ENCODE measurements at regions of chr20 and their contacts with region 1.

Region 1: GRCh38 chr20:44092551-44093248 is 94.3 kb downstream of the JPH2 start:
- DNase-seq: no peak
- H3K4me3 ChIP-seq: no peak overlapping the region
- H3K27ac ChIP-seq: no peak overlapping the region
- H3K4me1 ChIP-seq: peaks cover 2% of the 10 kb centered on the region
- H3K27me3 ChIP-seq: no peaks in the 10 kb centered on the region
- CTCF ChIP-seq: no peak
- POLR2A ChIP-seq: no peak

Region 2: GRCh38 chr20:44066645-44067606 is 25.8 kb before region 1 on chr20:
- intact Hi-C with region 1: loop called (anchors 2 kb)
- DNase-seq: peak; percentile 77 to 90
- H3K4me3 ChIP-seq: no peak overlapping the region
- H3K27ac ChIP-seq: no peak overlapping the region
- H3K4me1 ChIP-seq: no peaks in the 10 kb centered on the region
- H3K27me3 ChIP-seq: no peaks in the 10 kb centered on the region
- CTCF ChIP-seq: no peak
- POLR2A ChIP-seq: no peak

Region 3: DNA sequence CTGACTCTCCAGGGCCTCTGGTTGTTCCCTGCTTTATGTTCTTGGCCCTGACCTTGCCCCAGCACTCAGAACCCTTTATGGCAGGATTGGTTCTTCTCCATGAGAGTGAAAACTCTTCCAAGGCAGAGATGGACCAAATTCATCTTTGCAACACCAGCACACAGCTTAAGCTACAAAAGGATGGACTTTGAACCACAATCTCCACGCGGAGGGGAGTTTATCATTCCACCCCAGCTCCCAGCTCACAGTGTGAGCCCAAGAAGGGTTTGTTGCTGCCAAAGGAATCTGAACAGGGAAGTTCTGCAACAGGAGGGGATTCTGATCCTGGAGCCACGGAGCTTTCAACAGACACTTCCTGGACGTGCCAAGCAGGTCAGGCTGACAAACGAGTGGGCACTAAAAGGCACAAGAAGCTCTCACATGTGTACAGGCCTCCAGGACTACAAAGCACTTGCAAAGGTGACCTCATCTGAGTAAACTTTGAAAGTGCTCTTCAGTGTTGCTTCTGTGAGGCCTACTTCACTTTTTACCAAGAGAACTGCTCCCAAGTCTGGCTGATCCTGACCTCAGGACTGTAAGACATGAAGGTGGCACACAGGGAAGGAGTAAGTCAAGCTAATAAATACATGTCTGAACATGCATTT is 209.4 kb after region 1 on chr20:
- intact Hi-C with region 1: no loop called
- DNase-seq: no peak
- H3K4me3 ChIP-seq: no peak overlapping the region
- H3K27ac ChIP-seq: no peak overlapping the region
- H3K4me1 ChIP-seq: no peaks in the 10 kb centered on the region
- H3K27me3 ChIP-seq: no peaks in the 10 kb centered on the region
- CTCF ChIP-seq: no peak
- POLR2A ChIP-seq: no peak

Measured in vagina (tissue), 2 donors.